Thyroid gland (tissue), 4 donors: ENCODE measurements at regions of chr9 and their contacts with region 1.

Region 1: GRCh38 chr9:5628530-5629311 is at the start of gene RIC1:
- DNase-seq: peak; percentile 92 to 93
- H3K4me3 ChIP-seq: peak within 1 kb of the TSS; percentile 86 to 97 (median 96)
- H3K27ac ChIP-seq: peak within 1 kb of the TSS; percentile 88 to 93 (median 92)
- H3K4me1 ChIP-seq: peaks cover 31 to 37% of the 10 kb centered on the region in 2 donors
- H3K27me3 ChIP-seq: no peaks in the 10 kb centered on the region
- CTCF ChIP-seq: peak in 3 of 6 experiments; percentile 13 to 27 (median 14)
- POLR2A ChIP-seq: peak; percentile 59 to 97
- total RNA-seq, gene RIC1: 42.7 to 56.1 (median 44.9) TPM

Region 2: DNA sequence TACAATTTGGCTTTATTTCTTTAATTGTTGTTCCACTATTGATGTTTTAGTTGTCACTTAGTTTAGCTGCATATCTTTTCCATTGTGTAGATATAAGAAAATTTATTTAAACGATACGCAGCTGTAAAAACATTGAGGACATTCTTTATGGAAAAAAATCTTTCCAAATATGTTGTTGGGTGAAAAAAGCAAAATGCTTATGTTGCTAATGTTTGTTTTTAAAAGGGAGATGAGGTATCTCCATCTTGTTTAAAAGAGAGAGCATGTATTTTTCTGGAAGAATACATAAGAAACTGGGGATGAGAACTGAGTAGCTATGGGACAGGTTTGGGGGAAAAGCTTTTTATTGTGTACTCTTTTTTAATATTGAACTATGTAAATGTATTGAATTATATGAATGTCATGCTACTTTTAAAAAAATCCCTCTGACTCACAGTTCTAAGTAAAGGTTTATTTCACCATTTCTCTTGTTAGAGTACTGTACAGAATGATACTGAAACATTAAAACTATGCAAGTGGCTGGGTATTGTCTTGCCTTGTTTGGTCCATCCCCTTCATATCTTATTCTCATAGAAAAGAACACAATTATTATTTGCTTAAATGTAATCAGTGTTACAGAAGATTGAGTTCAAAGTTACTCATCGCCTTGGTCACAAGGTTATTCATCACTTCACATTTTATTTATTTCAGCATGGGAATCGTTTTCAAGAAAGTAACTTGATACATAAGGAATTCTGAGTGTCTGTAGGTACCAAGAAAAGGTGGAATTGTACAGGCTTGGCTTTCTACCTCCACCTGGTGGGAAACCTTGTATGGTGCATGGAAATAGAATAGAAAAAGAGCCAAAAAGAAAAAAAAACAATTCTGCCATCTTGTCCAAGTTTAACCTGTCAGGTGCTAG is 86.0 kb after region 1 on chr9:
- intact Hi-C with region 1: loop called (anchors 10 kb)
- DNase-seq: peak in 1 of 2 donors; percentile 13
- H3K4me3 ChIP-seq: no peak overlapping the region
- H3K27ac ChIP-seq: no peak overlapping the region
- H3K4me1 ChIP-seq: peaks cover 0 to 7% of the 10 kb centered on the region in 2 donors
- H3K27me3 ChIP-seq: no peaks in the 10 kb centered on the region
- CTCF ChIP-seq: peak in 5 of 6 experiments; percentile 29 to 78 (median 64)
- POLR2A ChIP-seq: no peak